AG04449 (cell line): ENCODE measurements at regions of chr6 and their contacts with region 1.

Region 1: DNA sequence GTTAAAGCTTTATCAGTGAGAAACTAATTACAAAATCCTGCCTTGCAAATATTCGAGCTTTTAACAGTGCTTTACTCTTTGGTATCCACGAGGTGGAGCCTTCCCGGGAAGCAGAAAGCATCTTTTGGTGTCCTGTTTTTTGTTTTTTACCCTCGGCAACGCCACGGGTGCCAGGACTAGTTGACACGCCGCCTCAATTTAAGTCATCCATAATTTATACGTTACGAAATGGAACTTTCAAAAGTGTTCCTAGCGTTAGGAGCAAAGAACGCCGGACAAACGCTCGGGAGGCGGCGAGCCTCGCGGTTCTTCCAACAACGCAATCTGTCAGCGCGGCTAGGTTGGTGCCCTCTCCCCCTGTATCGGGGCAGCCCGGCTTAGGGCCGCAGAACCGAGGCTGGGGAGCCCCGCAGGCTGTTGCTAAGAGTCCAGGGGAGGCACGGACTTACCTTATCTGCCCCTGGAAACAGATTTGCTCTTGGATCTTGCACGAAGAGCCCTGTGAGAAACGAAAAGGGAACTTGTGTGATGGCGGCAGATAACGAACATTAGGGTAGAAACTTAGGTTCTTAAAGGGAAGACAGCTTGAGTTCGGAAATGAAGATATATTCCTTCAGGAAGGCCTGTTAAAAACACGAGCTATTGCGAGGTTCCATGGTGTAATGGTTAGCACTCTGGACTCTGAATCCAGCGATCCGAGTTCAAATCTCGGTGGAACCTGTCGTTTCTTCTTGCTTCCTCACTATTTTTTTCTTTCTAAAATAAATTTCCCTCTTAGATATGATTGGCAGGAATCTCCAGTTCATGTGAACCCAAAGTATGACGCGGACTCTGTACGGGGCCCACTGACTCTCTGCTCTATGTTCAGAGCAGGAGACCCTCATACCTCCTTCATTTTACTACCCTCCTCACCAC is 46.2 kb upstream of the ZNF184 start:
- DNase-seq: peak; percentile 63
- H3K4me3 ChIP-seq: peak overlapping the region; percentile 78
- CTCF ChIP-seq: peak; percentile 76

Region 2: GRCh38 chr6:27503436-27504030 is 15.6 kb before region 1 on chr6:
- CTCF ChIA-PET with region 1: interaction called, 30 read pairs
- POLR2A ChIA-PET with region 1: no interaction called
- DNase-seq: peak; percentile 26
- H3K4me3 ChIP-seq: peak overlapping the region; percentile 62
- CTCF ChIP-seq: no peak

Region 3: GRCh38 chr6:27650620-27651370 is 131.7 kb after region 1 on chr6:
- CTCF ChIA-PET with region 1: no interaction called
- POLR2A ChIA-PET with region 1: no interaction called
- DNase-seq: no peak
- H3K4me3 ChIP-seq: no peak overlapping the region
- CTCF ChIP-seq: no peak

Region 4: DNA sequence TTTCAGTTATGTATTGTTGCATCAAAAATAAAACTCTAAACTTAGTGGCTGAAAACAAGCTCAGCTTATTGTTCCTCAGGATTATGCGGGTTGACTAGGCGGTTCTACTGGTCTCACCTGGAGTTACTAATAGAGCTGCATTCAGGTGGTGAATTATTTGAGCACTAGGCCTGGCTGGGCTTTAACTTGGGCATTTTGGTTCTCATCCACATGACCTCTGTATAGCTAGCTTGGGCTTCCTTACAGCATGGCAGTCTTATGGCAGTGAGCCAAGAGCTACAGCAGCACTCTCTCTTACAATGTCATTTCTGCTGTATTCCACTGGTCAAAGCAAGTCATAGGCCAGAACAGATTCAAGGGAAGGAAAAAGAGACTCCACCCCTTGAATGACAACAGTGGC is 763.8 kb after region 1 on chr6:
- CTCF ChIA-PET with region 1: no interaction called
- POLR2A ChIA-PET with region 1: no interaction called
- DNase-seq: no peak
- H3K4me3 ChIP-seq: no peak overlapping the region
- CTCF ChIP-seq: no peak